ENCODE measurements at regions of chr14 and their contacts with region 1.

Region 1: DNA sequence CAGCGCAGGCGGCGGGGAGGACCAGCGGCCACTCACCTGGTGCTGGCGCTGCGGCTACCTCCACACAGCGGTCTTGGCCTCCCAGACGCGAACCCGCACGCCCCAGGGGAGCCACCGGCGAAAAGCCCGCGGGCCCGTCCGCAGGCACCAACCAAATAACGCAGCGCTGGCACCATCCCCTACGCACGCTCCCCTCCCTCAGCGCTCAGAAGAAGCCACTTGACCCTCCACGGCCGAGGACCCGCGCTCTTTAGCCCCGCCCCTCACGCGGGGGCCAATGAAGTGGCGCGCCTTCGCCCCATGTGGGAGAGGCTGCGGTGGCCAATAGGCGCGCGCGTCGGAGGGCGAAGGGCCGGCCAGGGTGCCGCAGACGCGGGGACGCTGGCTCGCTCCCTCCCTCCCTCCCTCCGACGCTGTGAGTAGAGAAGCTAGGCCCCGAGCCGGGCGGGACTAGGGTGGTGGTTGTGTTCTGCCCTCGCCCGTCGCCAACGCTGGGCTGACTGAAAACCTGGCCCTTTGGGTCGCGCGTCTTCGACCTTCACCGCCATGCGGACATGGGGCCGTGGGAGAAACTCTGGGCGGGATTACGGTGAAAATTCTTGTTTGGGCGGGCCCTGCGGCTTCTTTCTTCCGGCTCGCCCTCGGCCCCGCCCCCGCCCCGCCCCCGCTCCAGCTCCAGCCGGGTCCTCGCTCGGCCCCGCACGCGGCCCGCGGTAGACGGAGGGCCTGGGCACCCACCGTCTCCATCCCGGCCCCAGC is at the starts of genes DMAC2L and L2HGDH:
- DNase-seq: peak; percentile 89
- H3K4me3 Mint-ChIP-seq: peak within 1 kb of the TSS; percentile 94
- H3K27ac Mint-ChIP-seq: peak within 1 kb of the TSS; percentile 95
- H3K4me1 Mint-ChIP-seq: peaks cover 41% of the 10 kb centered on the region
- H3K27me3 Mint-ChIP-seq: no peaks in the 10 kb centered on the region
- total RNA-seq, gene DMAC2L: 11.7 to 13.7 TPM
- total RNA-seq, gene L2HGDH: 13.5 to 14.3 TPM

Region 2: GRCh38 chr14:49585803-49586672 is 726.1 kb before region 1 on chr14 and contains the start of gene RPS29:
- CTCF ChIA-PET with region 1: no interaction called
- intact Hi-C with region 1: loop called (anchors 2 kb)
- DNase-seq: peak; percentile 99
- H3K4me3 Mint-ChIP-seq: peak within 1 kb of the TSS; percentile 87
- H3K27ac Mint-ChIP-seq: peak within 1 kb of the TSS; percentile 98
- H3K4me1 Mint-ChIP-seq: peaks cover 40% of the 10 kb centered on the region
- H3K27me3 Mint-ChIP-seq: peaks cover 3% of the 10 kb centered on the region
- total RNA-seq, gene RPS29: 1,858 to 2,382 TPM

Region 3: GRCh38 chr14:49692811-49693734 is 619.1 kb before region 1 on chr14 and contains the start of gene KLHDC1:
- CTCF ChIA-PET with region 1: no interaction called
- intact Hi-C with region 1: loop called (anchors 5 kb)
- DNase-seq: peak; percentile 84
- H3K4me3 Mint-ChIP-seq: peak within 1 kb of the TSS; percentile 81
- H3K27ac Mint-ChIP-seq: peak within 1 kb of the TSS; percentile 62
- H3K4me1 Mint-ChIP-seq: peaks cover 34% of the 10 kb centered on the region
- H3K27me3 Mint-ChIP-seq: no peaks in the 10 kb centered on the region
- total RNA-seq, gene KLHDC1: 0.57 to 0.79 TPM

Region 4: GRCh38 chr14:49862089-49862673 is 450.0 kb before region 1 on chr14:
- CTCF ChIA-PET with region 1: interaction called, 3 read pairs
- intact Hi-C with region 1: loop called (anchors 2 kb)
- DNase-seq: peak; percentile 91
- H3K4me3 Mint-ChIP-seq: no peak overlapping the region
- H3K27ac Mint-ChIP-seq: no peak overlapping the region
- H3K4me1 Mint-ChIP-seq: peaks cover 14% of the 10 kb centered on the region
- H3K27me3 Mint-ChIP-seq: peaks cover 2% of the 10 kb centered on the region

Region 5: GRCh38 chr14:50532502-50533240 is 220.5 kb after region 1 on chr14 and contains the start of gene MAP4K5:
- CTCF ChIA-PET with region 1: interaction called, 13 read pairs
- intact Hi-C with region 1: no loop called
- DNase-seq: peak; percentile 89
- H3K4me3 Mint-ChIP-seq: peak within 1 kb of the TSS; percentile 85
- H3K27ac Mint-ChIP-seq: peak within 1 kb of the TSS; percentile 72
- H3K4me1 Mint-ChIP-seq: peaks cover 45% of the 10 kb centered on the region
- H3K27me3 Mint-ChIP-seq: no peaks in the 10 kb centered on the region
- total RNA-seq, gene MAP4K5: 10.2 to 11.2 TPM

Region 6: DNA sequence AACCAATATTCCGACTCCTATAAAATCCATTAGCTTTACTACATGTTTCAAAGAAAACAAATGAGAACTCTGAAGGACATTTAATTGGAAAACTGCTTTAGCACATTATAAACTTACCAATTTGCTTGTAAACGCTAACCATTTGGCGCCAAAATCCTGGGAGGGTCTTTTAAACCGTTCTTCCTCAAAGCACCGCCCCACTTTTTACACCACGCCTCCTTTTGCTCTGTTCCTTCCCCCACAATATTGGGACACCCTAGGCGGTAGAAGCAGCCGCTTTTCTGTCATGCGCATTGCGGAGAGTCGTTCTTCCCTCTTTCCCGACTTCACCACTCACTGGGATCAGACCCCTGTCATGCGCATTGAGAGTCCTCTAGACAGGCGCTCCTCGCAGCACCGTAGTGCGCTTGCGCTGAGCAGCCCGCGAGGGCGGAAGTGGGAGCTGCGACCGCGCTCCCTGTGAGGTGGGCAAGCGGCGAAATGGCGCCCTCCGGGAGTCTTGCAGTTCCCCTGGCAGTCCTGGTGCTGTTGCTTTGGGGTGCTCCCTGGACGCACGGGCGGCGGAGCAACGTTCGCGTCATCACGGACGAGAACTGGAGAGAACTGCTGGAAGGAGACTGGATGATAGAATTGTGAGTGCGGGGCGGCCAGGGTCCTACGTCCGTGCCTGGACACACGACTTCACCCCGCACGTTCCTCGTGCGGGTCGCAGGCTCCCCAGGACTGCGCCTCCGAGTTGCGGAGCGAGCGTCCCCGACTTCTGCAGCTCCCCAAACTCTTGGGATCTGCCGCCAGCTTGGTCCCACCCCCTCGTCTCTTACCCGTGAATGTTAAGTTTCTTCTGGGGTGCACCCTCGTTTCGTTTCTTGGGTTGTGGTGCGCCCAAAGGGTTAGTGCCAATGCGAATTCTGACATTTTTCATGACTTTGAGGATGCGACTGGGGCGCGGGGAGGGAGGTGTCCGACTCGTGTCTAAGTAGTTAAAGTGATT is 928.0 kb after region 1 on chr14 and contains the start of gene TMX1:
- CTCF ChIA-PET with region 1: no interaction called
- intact Hi-C with region 1: loop called (anchors 10 kb)
- DNase-seq: peak; percentile 95
- H3K4me3 Mint-ChIP-seq: no peak within 1 kb of the TSS
- H3K27ac Mint-ChIP-seq: no peak within 1 kb of the TSS
- H3K4me1 Mint-ChIP-seq: peaks cover 28% of the 10 kb centered on the region
- H3K27me3 Mint-ChIP-seq: no peaks in the 10 kb centered on the region
- total RNA-seq, gene TMX1: 59.4 to 59.6 TPM

Measured in activated naive CD4-positive, alpha-beta T cell treated with anti-CD3 and anti-CD28 coated beads for 36 hours (primary cell).